Activated naive CD4-positive, alpha-beta T cell treated with anti-CD3 and anti-CD28 coated beads for 36 hours (primary cell): ENCODE measurements at regions of chr5 and their contacts with region 1.

Region 1: GRCh38 chr5:82406205-82406773 is 128.1 kb upstream of the RPS23 start:
- DNase-seq: no peak
- H3K4me3 Mint-ChIP-seq: no peak overlapping the region
- H3K27ac Mint-ChIP-seq: no peak overlapping the region
- H3K4me1 Mint-ChIP-seq: no peaks in the 10 kb centered on the region
- H3K27me3 Mint-ChIP-seq: no peaks in the 10 kb centered on the region

Region 2: DNA sequence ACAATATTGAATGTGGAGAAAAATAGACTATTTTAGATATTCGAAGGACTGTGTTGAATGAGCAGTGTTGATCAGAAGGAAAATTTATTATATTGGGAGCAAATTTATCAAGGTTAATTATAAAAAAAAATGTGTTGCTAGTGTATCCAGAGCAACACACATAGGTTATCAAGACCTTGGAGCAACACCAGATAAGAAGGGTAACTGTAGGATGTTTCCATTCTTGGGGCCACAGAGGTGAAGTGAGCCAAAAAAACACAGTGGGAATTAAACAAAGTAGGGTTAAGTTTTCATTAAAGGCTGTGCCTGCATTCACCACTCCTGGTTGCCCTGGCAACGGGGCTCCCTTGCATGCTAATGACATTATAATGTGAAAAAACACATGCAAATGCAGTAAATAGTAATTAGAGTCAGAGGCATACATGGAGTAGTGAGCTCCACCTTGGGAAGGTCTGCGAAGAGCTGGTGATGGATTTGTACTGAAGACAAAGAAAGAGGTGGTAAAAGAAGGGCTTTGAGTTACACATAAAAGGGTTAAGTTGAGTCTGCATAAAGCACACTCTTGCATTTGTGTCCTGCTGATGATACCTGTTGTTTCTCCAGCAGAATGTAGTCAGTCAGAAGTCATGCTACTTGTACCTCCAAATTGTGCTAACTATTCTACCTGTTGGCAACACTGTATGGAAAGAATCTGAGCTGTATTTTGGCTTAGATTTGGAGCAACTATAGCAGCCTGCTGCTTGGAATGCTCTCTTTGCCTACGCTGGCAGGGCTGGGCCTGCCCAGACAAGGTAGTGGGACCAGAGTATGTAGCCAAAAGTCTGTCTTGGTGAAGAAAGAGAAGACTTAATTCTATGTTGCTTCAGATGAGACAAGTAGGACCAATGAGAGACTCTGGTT is 374.8 kb before region 1 on chr5:
- CTCF ChIA-PET with region 1: no interaction called
- intact Hi-C with region 1: loop called (anchors 5 kb)
- DNase-seq: no peak
- H3K4me3 Mint-ChIP-seq: no peak overlapping the region
- H3K27ac Mint-ChIP-seq: no peak overlapping the region
- H3K4me1 Mint-ChIP-seq: no peaks in the 10 kb centered on the region
- H3K27me3 Mint-ChIP-seq: no peaks in the 10 kb centered on the region

Region 3: DNA sequence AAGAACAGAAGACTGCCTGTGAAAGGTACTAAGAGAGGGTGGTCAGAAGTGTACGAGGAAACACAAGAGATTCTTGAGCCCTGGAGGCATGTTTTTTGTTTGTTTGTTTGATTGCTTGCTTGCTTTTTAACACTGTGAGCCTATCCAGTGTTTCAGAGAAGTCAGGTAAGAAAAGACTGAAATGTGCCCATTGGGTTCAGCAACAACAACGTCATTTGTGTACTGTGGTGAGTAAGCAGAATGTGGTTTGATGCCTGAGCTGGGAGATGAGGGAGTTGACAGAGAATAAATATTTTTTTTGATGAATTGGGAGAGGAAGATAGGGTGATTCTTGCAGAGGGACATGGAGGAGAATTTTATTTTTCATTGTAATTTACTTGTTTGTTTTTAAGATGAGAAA is 201.3 kb before region 1 on chr5:
- CTCF ChIA-PET with region 1: no interaction called
- intact Hi-C with region 1: no loop called
- DNase-seq: no peak
- H3K4me3 Mint-ChIP-seq: no peak overlapping the region
- H3K27ac Mint-ChIP-seq: no peak overlapping the region
- H3K4me1 Mint-ChIP-seq: no peaks in the 10 kb centered on the region
- H3K27me3 Mint-ChIP-seq: no peaks in the 10 kb centered on the region

Region 4: DNA sequence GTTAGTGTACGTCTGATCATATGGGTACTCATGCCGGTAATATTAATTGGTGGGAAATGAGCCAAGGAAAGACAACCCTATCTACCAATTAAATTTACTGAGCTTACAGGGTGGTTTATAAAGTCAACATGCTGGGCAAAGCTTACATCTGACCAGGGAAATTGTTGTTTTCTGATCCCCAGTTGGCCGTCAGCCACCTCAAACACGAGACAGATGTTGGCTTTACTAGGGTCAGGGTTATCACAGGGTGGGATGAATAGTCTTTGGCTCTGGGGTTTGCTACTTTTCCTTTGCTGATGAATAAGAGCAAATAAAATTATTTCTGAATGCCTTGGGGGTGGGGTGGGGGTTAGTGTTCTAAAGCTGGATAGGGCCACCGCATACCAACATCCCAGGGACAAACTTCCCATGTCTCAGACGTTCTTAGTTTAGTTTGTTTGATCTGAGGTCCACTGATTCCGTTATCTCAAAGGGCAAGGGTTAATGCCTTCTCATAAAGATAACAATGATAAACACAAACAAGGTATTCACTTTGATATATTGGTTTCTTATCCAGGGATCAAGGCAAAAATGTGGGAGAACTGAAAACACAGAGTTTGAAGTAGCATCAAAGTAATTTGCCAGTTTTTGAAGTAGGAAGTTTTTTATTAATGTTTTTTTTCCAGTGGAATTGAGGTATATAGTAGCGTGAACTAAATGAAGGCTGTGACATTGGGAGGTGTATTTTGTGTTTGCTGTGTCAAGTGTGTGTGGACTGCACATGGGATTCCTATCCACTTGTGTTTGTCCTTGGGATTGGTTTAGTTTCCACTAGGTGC is 19.1 kb before region 1 on chr5:
- CTCF ChIA-PET with region 1: no interaction called
- intact Hi-C with region 1: loop called (anchors 1 kb)
- DNase-seq: no peak
- H3K4me3 Mint-ChIP-seq: no peak overlapping the region
- H3K27ac Mint-ChIP-seq: no peak overlapping the region
- H3K4me1 Mint-ChIP-seq: peaks cover 11% of the 10 kb centered on the region
- H3K27me3 Mint-ChIP-seq: peaks cover 4% of the 10 kb centered on the region